ENCODE measurements at regions of chr17 and their contacts with region 1.

Region 1: DNA sequence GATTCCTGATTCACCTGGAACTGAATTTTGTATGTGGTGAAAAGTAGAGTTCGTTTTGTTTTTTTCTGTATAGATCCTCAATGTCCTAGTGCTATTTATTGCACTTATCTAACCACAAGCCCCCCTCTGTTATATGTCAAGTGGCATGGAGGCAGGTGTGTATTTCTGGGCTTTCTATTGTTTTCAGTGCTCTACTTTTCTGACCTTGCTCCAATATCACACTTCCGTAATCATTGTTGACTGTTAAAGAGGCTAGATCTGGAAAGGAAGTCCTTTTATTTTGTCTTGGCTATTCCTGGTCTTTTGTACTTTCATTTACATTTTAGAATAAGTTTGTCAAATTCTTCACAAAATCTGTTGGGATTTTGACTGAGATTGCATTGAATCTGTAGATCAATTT is 26.8 kb upstream of the FBXO47 start:
- DNase-seq: no peak
- H3K4me3 ChIP-seq: no peak overlapping the region
- H3K27ac ChIP-seq: no peak overlapping the region
- H3K4me1 ChIP-seq: peaks cover 0 to 12% (median 3%) of the 10 kb centered on the region in 4 experiments
- H3K27me3 ChIP-seq: no peaks in the 10 kb centered on the region

Region 2: DNA sequence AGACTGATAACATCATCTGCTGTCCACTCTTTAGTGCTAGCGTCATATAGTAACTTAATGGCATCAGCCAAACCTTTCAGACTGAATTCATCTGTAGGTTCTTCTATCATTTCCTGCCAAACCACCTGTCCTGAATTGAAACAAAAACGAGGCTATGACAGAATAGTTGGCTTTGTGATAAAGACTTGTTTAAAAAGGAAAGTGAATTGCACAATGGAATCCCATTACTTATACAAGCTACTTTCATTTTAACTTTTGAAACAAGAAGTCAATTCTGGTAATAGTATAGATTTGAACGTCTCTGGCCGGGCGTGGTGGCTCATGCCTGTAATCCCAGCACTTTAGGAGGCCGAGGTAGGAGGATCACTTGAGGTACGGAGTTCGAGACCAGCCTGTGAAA is 50.4 kb before region 1 on chr17:
- CTCF ChIA-PET with region 1: no interaction called
- POLR2A ChIA-PET with region 1: no interaction called
- DNase-seq: peak in 2 of 3 donors; percentile 23 to 37
- H3K4me3 ChIP-seq: no peak overlapping the region
- H3K27ac ChIP-seq: no peak overlapping the region
- H3K4me1 ChIP-seq: no peaks in the 10 kb centered on the region
- H3K27me3 ChIP-seq: no peaks in the 10 kb centered on the region

Region 3: GRCh38 chr17:38982858-38983746 is 10.9 kb before region 1 on chr17:
- CTCF ChIA-PET with region 1: interaction called, 13 read pairs
- POLR2A ChIA-PET with region 1: interaction called, 3 read pairs
- DNase-seq: peak; percentile 77 to 88 (median 83)
- H3K4me3 ChIP-seq: no peak overlapping the region
- H3K27ac ChIP-seq: no peak overlapping the region
- H3K4me1 ChIP-seq: no peaks in the 10 kb centered on the region
- H3K27me3 ChIP-seq: peaks cover 0 to 2% (median 0%) of the 10 kb centered on the region in 5 experiments

Region 4: DNA sequence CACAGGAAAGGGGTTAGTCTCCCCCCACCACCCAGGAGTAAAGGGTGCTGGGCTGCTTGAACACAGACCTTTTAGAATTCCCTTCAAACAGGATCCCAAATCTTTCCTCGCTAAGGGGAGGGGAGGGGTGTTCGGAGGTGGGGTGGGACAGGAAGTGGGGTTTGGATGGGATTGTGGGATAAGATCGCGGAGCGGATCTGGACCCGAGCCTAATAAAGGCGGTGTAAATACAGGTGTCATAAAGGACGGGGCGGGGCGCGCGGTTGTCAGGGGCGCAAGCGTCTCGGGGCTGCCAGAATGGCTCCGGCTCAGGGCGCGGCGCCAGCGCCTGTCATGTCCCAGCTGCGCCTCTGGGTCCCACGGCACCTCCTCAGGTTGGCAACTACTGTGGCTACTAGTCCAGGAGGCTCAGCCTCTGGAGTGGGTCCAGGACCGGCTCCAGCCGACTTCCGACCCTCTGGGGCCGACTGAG is 33.0 kb after region 1 on chr17:
- CTCF ChIA-PET with region 1: no interaction called
- POLR2A ChIA-PET with region 1: no interaction called
- DNase-seq: peak in 2 of 3 donors; percentile 47 to 61
- H3K4me3 ChIP-seq: peak overlapping the region in 3 of 7 experiments; percentile 6 to 60 (median 11)
- H3K27ac ChIP-seq: no peak overlapping the region
- H3K4me1 ChIP-seq: peaks cover 0 to 11% (median 6%) of the 10 kb centered on the region in 4 experiments
- H3K27me3 ChIP-seq: peaks cover 2 to 36% (median 5%) of the 10 kb centered on the region in 5 experiments